ENCODE measurements at regions of chr7 and their contacts with region 1.

Region 1: DNA sequence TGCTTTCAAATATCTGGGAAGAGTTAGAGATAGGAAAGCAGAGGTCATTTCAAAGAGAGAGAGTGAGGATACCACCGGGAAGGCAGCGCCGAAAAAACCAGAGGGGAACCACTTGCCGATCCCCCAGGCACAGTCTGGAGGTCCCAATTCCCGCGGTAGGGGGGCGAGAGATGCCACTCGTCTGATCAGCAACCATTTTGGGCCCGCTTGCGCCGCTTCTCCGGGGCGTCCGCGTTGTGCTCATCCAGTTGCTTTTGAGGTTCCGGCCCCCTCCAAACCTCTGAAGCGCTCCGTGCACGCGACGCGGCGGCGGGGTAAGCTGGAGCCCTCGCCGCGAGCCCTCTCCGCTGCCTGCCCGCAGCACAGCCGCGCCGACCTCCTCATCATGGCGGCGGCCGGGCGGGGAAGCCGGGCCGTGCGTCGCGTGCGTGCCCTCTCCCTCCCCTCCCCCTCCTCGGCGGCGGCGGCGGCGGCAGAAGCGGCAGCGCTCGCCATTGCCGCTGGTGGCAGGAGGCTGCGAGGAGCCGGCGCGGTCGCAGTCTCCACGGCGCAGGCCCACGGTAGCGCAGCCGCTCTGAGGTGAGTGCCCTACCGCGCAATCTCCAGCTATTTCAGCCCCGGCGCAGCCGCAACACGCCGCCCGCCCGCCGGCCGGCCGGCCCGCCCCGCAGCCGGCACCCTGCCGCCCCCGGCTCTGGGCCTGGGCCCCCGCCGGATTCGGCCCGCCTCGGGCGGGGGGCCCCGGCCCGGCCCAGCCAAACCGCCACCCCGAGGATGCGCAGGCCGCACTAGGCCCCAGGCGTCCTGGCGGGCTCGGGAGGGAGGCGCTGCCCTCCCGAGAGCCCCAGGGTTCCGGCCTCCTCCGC is at the start of gene NRF1:
- DNase-seq: peak; percentile 84 to 98 (median 91)
- ATAC-seq: peak; percentile 87
- H3K4me3 ChIP-seq: peak within 1 kb of the TSS; percentile 75
- H3K4me3 Mint-ChIP-seq: peak within 1 kb of the TSS; percentile 100
- H3K27ac ChIP-seq: peak within 1 kb of the TSS; percentile 69 to 75
- H3K27ac Mint-ChIP-seq: peak within 1 kb of the TSS; percentile 95
- H3K4me1 ChIP-seq: peaks cover 44% of the 10 kb centered on the region
- H3K4me1 Mint-ChIP-seq: peaks cover 70% of the 10 kb centered on the region
- H3K27me3 ChIP-seq: no peaks in the 10 kb centered on the region
- H3K27me3 Mint-ChIP-seq: no peaks in the 10 kb centered on the region
- CTCF ChIP-seq: no peak
- total RNA-seq, gene NRF1: 35.4 to 36.1 TPM

Region 2: GRCh38 chr7:128455551-128456254 is 1155.8 kb before region 1 on chr7 and contains the start of gene HILPDA:
- CTCF ChIA-PET with region 1: no interaction called
- POLR2A ChIA-PET with region 1: no interaction called
- intact Hi-C with region 1: loop called in 1 of 2 experiments (anchors 10 kb)
- DNase-seq: peak; percentile 86 to 99 (median 92)
- ATAC-seq: peak; percentile 88
- H3K4me3 ChIP-seq: peak within 1 kb of the TSS; percentile 76
- H3K4me3 Mint-ChIP-seq: peak within 1 kb of the TSS; percentile 90
- H3K27ac ChIP-seq: peak within 1 kb of the TSS; percentile 62 to 67
- H3K27ac Mint-ChIP-seq: peak within 1 kb of the TSS; percentile 88
- H3K4me1 ChIP-seq: peaks cover 28% of the 10 kb centered on the region
- H3K4me1 Mint-ChIP-seq: peaks cover 22% of the 10 kb centered on the region
- H3K27me3 ChIP-seq: no peaks in the 10 kb centered on the region
- H3K27me3 Mint-ChIP-seq: no peaks in the 10 kb centered on the region
- CTCF ChIP-seq: no peak
- total RNA-seq, gene HILPDA: 1.7 TPM

Region 3: GRCh38 chr7:129433847-129434674 is 177.4 kb before region 1 on chr7 and contains the start of gene STRIP2:
- CTCF ChIA-PET with region 1: interaction called, 3 read pairs
- POLR2A ChIA-PET with region 1: interaction called, 4 read pairs
- intact Hi-C with region 1: loop called in 1 of 2 experiments (anchors 5 kb)
- DNase-seq: peak; percentile 68 to 92 (median 84)
- ATAC-seq: peak; percentile 94
- H3K4me3 ChIP-seq: peak within 1 kb of the TSS; percentile 88
- H3K4me3 Mint-ChIP-seq: peak within 1 kb of the TSS; percentile 95
- H3K27ac ChIP-seq: no peak within 1 kb of the TSS
- H3K27ac Mint-ChIP-seq: peak within 1 kb of the TSS; percentile 34
- H3K4me1 ChIP-seq: peaks cover 19% of the 10 kb centered on the region
- H3K4me1 Mint-ChIP-seq: peaks cover 23% of the 10 kb centered on the region
- H3K27me3 ChIP-seq: peaks cover 15 to 30% of the 10 kb centered on the region in 2 experiments
- H3K27me3 Mint-ChIP-seq: peaks cover 35% of the 10 kb centered on the region
- CTCF ChIP-seq: peak; percentile 16
- total RNA-seq, gene STRIP2: 0.11 to 0.14 TPM

Region 4: GRCh38 chr7:129591868-129592267 is 19.6 kb before region 1 on chr7:
- CTCF ChIA-PET with region 1: no interaction called
- POLR2A ChIA-PET with region 1: no interaction called
- intact Hi-C with region 1: no loop called
- DNase-seq: no peak
- ATAC-seq: no peak
- H3K4me3 ChIP-seq: no peak overlapping the region
- H3K4me3 Mint-ChIP-seq: no peak overlapping the region
- H3K27ac ChIP-seq: no peak overlapping the region
- H3K27ac Mint-ChIP-seq: no peak overlapping the region
- H3K4me1 ChIP-seq: no peaks in the 10 kb centered on the region
- H3K4me1 Mint-ChIP-seq: no peaks in the 10 kb centered on the region
- H3K27me3 ChIP-seq: peaks cover 0 to 12% of the 10 kb centered on the region in 2 experiments
- H3K27me3 Mint-ChIP-seq: peaks cover 22% of the 10 kb centered on the region
- CTCF ChIP-seq: no peak

Region 5: DNA sequence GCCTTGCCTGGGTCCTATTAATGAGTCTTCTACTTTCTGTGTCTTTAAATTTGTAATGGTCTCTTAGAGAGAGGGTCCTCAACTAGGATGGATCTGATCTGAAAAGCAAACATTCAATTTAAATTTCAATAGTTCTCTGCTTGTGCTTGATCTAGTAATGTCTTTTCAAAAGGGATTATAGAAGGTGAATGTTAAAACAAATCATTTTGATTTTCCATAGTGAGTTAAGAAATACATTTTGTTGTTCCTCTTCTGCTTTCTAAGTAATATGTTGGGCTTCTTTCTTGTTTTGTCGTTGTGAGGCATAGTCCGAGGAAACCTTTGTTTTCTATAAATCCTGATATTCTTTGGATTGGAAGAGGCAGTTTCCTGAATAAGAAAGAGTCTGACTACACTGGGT is 18.9 kb after region 1 on chr7:
- CTCF ChIA-PET with region 1: interaction called, 13 read pairs
- POLR2A ChIA-PET with region 1: interaction called, 9 read pairs
- intact Hi-C with region 1: loop called (anchors 1 kb)
- DNase-seq: no peak
- ATAC-seq: no peak
- H3K4me3 ChIP-seq: no peak overlapping the region
- H3K4me3 Mint-ChIP-seq: no peak overlapping the region
- H3K27ac ChIP-seq: no peak overlapping the region
- H3K27ac Mint-ChIP-seq: no peak overlapping the region
- H3K4me1 ChIP-seq: peaks cover 10% of the 10 kb centered on the region
- H3K4me1 Mint-ChIP-seq: peaks cover 66% of the 10 kb centered on the region
- H3K27me3 ChIP-seq: no peaks in the 10 kb centered on the region
- H3K27me3 Mint-ChIP-seq: no peaks in the 10 kb centered on the region
- CTCF ChIP-seq: no peak

Region 6: DNA sequence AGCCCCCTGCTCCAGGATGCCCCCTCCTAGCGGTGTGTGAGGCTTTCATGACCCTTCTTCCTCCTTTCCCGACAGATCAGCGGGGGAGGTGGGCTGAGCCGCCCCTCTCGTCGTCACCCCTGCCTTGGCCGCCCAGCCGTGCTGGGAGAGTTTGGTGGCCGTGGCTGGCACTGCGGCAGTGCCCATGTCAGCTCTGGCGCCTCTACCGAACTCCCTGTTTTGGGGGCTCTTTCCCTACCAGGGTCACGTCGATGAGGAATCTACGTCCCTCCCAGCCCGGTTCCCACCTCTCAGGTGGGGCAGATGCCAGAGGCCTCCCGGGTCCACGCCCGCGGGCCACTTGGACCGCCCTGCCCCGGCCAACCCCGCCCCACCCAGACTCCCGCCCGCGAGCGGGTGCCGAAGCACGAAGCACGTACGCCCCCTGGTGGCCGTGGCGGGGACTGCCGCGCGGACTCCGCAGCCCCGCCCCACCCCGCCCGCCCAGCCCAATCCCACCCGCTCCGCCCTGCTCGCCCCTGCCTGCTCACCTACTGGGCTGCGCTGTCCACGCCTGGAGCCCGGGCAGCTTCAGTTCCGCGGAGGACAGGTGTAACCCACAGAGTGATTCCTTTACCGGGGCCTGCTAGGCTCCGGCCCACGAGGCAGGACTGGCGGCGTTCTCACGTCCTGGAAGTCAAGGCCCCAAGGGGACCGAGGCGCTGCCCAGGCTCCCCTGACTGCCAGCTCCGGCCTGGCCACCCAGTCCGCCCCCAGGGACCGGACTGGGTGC is 214.2 kb after region 1 on chr7:
- CTCF ChIA-PET with region 1: interaction called, 3 read pairs
- POLR2A ChIA-PET with region 1: no interaction called
- intact Hi-C with region 1: loop called in 1 of 2 experiments (anchors 5 kb)
- DNase-seq: peak; percentile 74 to 93 (median 88)
- ATAC-seq: peak; percentile 79
- H3K4me3 ChIP-seq: peak overlapping the region; percentile 71
- H3K4me3 Mint-ChIP-seq: peak overlapping the region; percentile 91
- H3K27ac ChIP-seq: no peak overlapping the region
- H3K27ac Mint-ChIP-seq: peak overlapping the region; percentile 39
- H3K4me1 ChIP-seq: peaks cover 28% of the 10 kb centered on the region
- H3K4me1 Mint-ChIP-seq: peaks cover 25% of the 10 kb centered on the region
- H3K27me3 ChIP-seq: no peaks in the 10 kb centered on the region
- H3K27me3 Mint-ChIP-seq: no peaks in the 10 kb centered on the region
- CTCF ChIP-seq: peak; percentile 87

Region 7: DNA sequence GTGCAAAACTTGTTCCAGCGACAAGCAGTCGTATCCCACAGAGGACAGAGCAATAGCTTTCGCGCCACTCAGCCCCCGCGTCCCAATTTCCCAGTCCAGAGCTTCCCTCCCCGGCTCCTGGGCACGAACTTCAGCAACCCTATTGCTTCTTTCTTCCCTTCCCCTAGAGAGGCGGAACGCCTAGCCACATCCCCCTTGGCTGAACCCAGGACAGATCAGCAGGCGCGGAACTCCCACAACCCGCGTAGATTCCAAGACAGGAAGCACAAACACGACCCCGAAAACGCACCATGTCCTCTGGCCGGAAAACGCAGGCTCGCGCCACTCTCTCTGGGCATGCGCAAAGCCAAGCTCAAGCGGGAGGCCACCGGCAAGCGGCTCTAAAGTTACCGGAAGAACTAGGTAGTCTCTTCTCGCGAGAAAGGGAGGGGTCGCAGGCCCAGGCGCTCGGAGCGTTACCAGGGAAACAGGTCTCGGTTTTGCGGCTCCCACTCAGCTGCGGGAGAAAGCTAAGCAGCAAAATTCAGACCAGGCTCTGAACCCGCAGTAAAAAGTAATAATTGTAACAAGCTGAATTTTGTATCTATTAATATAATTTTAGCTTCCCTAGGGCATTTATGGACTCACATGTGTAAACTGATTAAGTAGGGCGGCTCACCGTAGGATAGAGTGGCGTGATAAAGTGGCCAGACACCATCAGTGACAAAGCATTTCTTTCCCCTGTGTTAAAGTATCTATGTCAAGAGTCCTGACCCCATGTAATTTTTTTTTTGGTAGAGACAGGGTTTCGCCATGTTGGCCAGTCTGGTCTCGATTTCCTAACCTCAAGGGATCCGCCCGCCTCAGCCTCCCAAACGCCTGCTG is 593.8 kb after region 1 on chr7 and contains the start of gene TMEM209:
- CTCF ChIA-PET with region 1: no interaction called
- POLR2A ChIA-PET with region 1: no interaction called
- intact Hi-C with region 1: loop called in 1 of 2 experiments (anchors 10 kb)
- DNase-seq: peak; percentile 85 to 98 (median 91)
- ATAC-seq: peak; percentile 96
- H3K4me3 ChIP-seq: peak within 1 kb of the TSS; percentile 88
- H3K4me3 Mint-ChIP-seq: peak within 1 kb of the TSS; percentile 96
- H3K27ac ChIP-seq: peak within 1 kb of the TSS; percentile 81 to 87
- H3K27ac Mint-ChIP-seq: peak within 1 kb of the TSS; percentile 89
- H3K4me1 ChIP-seq: peaks cover 20% of the 10 kb centered on the region
- H3K4me1 Mint-ChIP-seq: peaks cover 40% of the 10 kb centered on the region
- H3K27me3 ChIP-seq: no peaks in the 10 kb centered on the region
- H3K27me3 Mint-ChIP-seq: no peaks in the 10 kb centered on the region
- CTCF ChIP-seq: no peak
- total RNA-seq, gene TMEM209: 18.3 to 18.8 TPM

Region 8: GRCh38 chr7:130668257-130669084 is 1057.0 kb after region 1 on chr7 and contains the start of gene COPG2:
- CTCF ChIA-PET with region 1: no interaction called
- POLR2A ChIA-PET with region 1: no interaction called
- intact Hi-C with region 1: loop called in 1 of 2 experiments (anchors 5 kb)
- DNase-seq: peak; percentile 21 to 85 (median 68)
- ATAC-seq: peak; percentile 77
- H3K4me3 ChIP-seq: peak within 1 kb of the TSS; percentile 83
- H3K4me3 Mint-ChIP-seq: peak within 1 kb of the TSS; percentile 95
- H3K27ac ChIP-seq: peak within 1 kb of the TSS; percentile 39 to 41
- H3K27ac Mint-ChIP-seq: peak within 1 kb of the TSS; percentile 82
- H3K4me1 ChIP-seq: peaks cover 13% of the 10 kb centered on the region
- H3K4me1 Mint-ChIP-seq: peaks cover 21% of the 10 kb centered on the region
- H3K27me3 ChIP-seq: no peaks in the 10 kb centered on the region
- H3K27me3 Mint-ChIP-seq: no peaks in the 10 kb centered on the region
- CTCF ChIP-seq: no peak
- total RNA-seq, gene COPG2: 4.1 to 4.3 TPM

Measured in CD4-positive, alpha-beta T cell (primary cell).